ENCODE measurements at regions of chr15 and their contacts with region 1.

Region 1: GRCh38 chr15:49145651-49146609 is 9.5 kb downstream of the COPS2 start:
- DNase-seq: peak; percentile 47
- ATAC-seq: peak; percentile 36
- H3K4me3 Mint-ChIP-seq: no peak overlapping the region
- H3K27ac Mint-ChIP-seq: peak overlapping the region; percentile 10
- H3K4me1 Mint-ChIP-seq: peaks cover 38% of the 10 kb centered on the region
- H3K27me3 Mint-ChIP-seq: no peaks in the 10 kb centered on the region

Region 2: GRCh38 chr15:49046220-49047102 is 99.5 kb before region 1 on chr15 and contains the start of gene SECISBP2L:
- CTCF ChIA-PET with region 1: interaction called, 3 read pairs
- POLR2A ChIA-PET with region 1: no interaction called
- intact Hi-C with region 1: loop called in 1 of 2 experiments (anchors 2 kb)
- DNase-seq: peak; percentile 95
- ATAC-seq: peak; percentile 97
- H3K4me3 Mint-ChIP-seq: peak within 1 kb of the TSS; percentile 92
- H3K27ac Mint-ChIP-seq: peak within 1 kb of the TSS; percentile 84
- H3K4me1 Mint-ChIP-seq: peaks cover 22% of the 10 kb centered on the region
- H3K27me3 Mint-ChIP-seq: no peaks in the 10 kb centered on the region
- total RNA-seq, gene SECISBP2L: 22.4 to 36.8 TPM

Region 3: GRCh38 chr15:49122541-49123062 is 23.3 kb before region 1 on chr15:
- CTCF ChIA-PET with region 1: interaction called, 16 read pairs
- POLR2A ChIA-PET with region 1: interaction called, 3 read pairs
- intact Hi-C with region 1: no loop called
- DNase-seq: no peak
- ATAC-seq: no peak
- H3K4me3 Mint-ChIP-seq: no peak overlapping the region
- H3K27ac Mint-ChIP-seq: no peak overlapping the region
- H3K4me1 Mint-ChIP-seq: no peaks in the 10 kb centered on the region
- H3K27me3 Mint-ChIP-seq: no peaks in the 10 kb centered on the region

Region 4: DNA sequence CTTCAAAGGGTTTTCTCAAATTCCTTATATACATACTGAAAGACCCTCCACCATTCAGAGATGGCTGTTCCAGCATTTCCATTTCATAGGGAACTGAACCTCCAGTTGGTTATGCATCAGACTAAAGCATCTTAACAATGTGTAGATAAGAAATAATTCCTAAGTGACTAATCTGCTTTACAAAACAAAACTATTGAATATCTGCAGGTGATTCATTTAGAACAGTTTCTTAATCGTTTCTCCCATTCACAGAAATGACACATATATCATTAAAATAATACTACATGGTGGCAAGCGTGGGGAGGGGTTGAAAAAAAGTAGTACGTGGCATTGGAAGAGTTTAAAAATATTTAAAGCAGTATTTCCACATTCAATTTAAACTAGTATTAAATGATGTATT is 10.0 kb before region 1 on chr15:
- CTCF ChIA-PET with region 1: interaction called, 19 read pairs
- POLR2A ChIA-PET with region 1: interaction called, 3 read pairs
- intact Hi-C with region 1: no loop called
- DNase-seq: no peak
- ATAC-seq: peak; percentile 47
- H3K4me3 Mint-ChIP-seq: no peak overlapping the region
- H3K27ac Mint-ChIP-seq: no peak overlapping the region
- H3K4me1 Mint-ChIP-seq: peaks cover 13% of the 10 kb centered on the region
- H3K27me3 Mint-ChIP-seq: no peaks in the 10 kb centered on the region